ENCODE measurements at regions of chr15 and their contacts with region 1.

Region 1: DNA sequence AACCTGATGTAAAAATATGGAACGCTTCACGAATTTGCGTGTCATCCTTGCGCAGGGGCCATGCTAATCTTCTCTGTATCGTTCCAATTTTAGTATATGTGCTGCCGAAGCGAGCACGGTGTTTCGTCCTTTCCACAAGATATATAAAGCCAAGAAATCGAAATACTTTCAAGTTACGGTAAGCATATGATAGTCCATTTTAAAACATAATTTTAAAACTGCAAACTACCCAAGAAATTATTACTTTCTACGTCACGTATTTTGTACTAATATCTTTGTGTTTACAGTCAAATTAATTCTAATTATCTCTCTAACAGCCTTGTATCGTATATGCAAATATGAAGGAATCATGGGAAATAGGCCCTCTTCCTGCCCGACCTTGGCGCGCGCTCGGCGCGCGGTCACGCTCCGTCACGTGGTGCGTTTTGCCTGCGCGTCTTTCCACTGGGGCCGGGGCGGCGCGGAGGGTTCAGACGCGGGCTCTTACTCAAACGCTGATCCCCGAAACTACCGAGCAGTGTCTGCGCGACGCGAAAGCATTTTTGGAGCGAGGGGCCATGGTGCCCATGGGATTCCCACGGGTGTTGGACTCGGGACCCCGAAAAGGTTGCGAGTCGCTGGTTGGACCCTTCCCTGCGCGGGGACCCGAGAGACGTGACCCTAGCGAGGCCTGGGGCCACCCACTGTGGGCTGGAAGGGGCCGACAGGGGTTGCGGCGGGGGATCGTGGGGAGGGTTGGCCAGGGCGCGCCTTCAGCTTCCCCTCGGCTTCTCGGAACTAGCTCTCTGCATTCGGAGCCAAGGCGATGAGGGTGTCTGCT is at the start of gene RNU6-1:
- DNase-seq: peak; percentile 88
- ATAC-seq: peak; percentile 84
- H3K4me3 ChIP-seq: peak within 1 kb of the TSS; percentile 81 to 85
- H3K27ac ChIP-seq: peak within 1 kb of the TSS; percentile 89
- H3K4me1 ChIP-seq: peaks cover 74% of the 10 kb centered on the region
- H3K27me3 ChIP-seq: no peaks in the 10 kb centered on the region
- CTCF ChIP-seq: no peak
- total RNA-seq, gene RNU6-1: not detected

Region 2: DNA sequence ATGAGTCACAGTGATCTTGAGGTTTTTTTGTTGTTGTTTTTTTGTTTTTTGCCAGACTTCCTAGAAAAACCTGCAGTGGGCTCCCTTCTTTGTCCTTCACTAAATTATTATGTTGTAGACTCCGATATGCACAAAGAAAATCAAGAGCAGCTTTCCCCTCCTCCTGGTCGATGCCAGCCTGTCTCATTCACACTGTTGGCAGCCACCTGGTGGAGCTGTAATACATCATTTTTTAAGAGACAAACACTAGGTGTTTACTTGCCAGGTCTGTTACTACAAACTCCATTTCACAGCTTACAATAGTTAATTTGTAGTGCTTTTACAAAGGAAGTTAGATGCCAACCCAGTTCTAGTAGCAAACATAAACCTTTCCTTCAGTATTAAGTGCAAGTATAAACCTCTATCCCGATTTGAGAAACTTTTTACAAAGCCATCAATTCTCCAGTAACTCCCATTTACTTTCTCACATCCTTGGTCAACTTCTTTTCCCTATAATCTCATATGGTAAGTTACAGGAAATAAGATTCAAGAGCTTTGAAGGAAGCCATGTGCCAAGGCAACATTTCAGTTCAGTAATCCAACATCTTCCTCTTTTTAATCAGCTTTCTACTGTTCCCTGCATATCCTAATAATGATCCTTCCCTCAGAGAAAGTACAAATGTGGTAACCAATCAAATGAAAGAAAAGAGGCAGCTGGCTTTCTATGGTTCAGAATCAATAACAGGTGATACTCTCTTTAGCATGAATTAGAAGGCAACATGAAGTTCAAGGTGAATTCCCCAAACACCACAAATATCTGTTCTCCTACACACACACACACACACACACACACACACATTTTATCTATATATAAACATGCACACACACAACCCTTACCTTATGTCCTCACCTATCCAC is 599.7 kb before region 1 on chr15:
- CTCF ChIA-PET with region 1: no interaction called
- POLR2A ChIA-PET with region 1: no interaction called
- in situ Hi-C with region 1: no loop called
- intact Hi-C with region 1: loop called (anchors 10 kb)
- DNase-seq: no peak
- ATAC-seq: peak; percentile 91
- H3K4me3 ChIP-seq: no peak overlapping the region
- H3K27ac ChIP-seq: peak overlapping the region; percentile 59
- H3K4me1 ChIP-seq: peaks cover 37% of the 10 kb centered on the region
- H3K27me3 ChIP-seq: no peaks in the 10 kb centered on the region
- CTCF ChIP-seq: peak; percentile 72

Region 3: GRCh38 chr15:67383899-67384298 is 456.2 kb before region 1 on chr15:
- CTCF ChIA-PET with region 1: no interaction called
- POLR2A ChIA-PET with region 1: no interaction called
- in situ Hi-C with region 1: no loop called
- intact Hi-C with region 1: loop called (anchors 10 kb)
- DNase-seq: no peak
- ATAC-seq: no peak
- H3K4me3 ChIP-seq: no peak overlapping the region
- H3K27ac ChIP-seq: no peak overlapping the region
- H3K4me1 ChIP-seq: no peaks in the 10 kb centered on the region
- H3K27me3 ChIP-seq: no peaks in the 10 kb centered on the region; the same call in none of the 2 replicates
- CTCF ChIP-seq: peak; percentile 33; the same call in 1 of the 2 replicates

Region 4: DNA sequence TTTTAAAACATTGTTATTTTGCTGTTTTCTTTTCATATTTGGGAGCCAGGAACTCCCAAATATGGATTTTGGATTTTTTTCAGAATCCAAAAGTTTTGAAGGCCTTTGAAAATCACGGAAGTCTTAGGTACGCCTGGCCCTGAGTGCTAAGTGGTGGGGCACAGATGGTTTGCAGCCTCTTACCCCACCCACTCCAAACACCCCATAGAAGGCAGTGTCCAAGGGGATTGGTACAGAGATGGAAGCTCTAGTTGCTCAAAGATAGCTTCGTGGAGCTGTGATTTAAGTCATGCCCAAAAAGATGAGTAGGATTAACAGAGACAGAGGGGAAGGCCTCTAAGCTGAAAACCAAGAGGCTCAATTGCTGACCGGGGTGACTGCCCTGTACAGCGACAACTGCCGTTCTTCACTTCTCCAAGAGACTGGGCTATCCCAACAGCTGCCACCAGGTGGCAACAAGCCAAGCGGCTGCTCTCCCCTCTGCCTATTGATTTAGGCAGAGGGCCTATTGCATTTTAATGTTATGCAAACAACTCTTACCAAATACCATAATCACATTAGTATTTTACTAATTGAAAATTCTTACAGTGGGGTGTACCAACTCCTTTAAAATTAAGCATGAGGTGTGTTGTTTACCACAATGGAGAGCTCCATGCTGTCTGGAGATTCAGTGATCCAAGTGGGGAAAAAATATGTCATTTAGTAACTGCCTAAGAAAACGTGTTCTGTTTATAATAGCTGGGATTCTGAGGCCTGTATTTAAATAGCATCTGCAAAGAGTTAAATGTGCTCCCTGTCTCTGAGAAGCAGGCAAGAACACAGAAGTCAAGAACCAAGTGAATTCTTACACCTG is 383.2 kb before region 1 on chr15:
- CTCF ChIA-PET with region 1: interaction called, 3 read pairs
- POLR2A ChIA-PET with region 1: no interaction called
- in situ Hi-C with region 1: no loop called
- intact Hi-C with region 1: loop called (anchors 2 kb)
- DNase-seq: peak; percentile 56
- ATAC-seq: peak; percentile 98
- H3K4me3 ChIP-seq: no peak overlapping the region
- H3K27ac ChIP-seq: no peak overlapping the region
- H3K4me1 ChIP-seq: no peaks in the 10 kb centered on the region
- H3K27me3 ChIP-seq: no peaks in the 10 kb centered on the region
- CTCF ChIP-seq: peak; percentile 96

Region 5: DNA sequence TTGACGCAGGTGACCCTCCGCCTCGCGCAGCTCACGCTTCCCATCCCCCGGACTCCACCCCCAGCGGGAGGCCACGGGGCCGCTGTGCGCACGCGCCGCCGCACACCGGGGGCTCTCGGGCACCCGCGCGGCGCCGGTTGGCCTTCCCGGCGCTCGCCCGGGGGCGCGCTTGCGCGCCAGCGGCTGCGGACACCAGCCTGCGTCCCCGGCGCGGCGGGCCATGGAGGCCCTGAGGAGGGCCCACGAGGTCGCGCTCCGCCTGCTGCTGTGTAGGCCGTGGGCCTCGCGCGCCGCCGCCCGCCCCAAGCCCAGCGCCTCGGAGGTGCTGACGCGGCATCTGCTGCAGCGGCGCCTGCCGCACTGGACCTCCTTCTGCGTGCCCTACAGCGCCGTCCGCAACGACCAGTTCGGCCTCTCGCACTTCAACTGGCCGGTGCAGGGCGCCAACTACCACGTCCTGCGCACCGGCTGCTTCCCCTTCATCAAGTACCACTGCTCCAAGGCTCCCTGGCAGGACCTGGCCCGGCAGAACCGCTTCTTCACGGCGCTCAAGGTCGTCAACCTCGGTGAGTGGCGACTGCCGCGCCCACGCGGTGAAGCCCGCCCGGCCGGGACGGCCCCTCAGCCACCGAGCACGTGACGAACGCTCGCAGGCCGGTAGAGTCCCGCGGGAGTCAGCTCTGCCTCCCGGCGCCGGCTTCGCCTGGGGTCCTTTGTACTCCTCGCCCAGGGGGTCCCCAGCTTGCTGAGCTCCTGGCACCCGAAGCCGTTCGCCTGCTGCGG is 318.9 kb before region 1 on chr15 and contains the start of gene C15orf61:
- CTCF ChIA-PET with region 1: no interaction called
- POLR2A ChIA-PET with region 1: no interaction called
- in situ Hi-C with region 1: no loop called
- intact Hi-C with region 1: loop called (anchors 5 kb)
- DNase-seq: no peak
- ATAC-seq: peak; percentile 94
- H3K4me3 ChIP-seq: peak within 1 kb of the TSS; percentile 77 to 84
- H3K27ac ChIP-seq: peak within 1 kb of the TSS; percentile 86
- H3K4me1 ChIP-seq: peaks cover 15% of the 10 kb centered on the region
- H3K27me3 ChIP-seq: no peaks in the 10 kb centered on the region
- CTCF ChIP-seq: peak; percentile 33
- total RNA-seq, gene C15orf61: 5.6 TPM

Region 6: DNA sequence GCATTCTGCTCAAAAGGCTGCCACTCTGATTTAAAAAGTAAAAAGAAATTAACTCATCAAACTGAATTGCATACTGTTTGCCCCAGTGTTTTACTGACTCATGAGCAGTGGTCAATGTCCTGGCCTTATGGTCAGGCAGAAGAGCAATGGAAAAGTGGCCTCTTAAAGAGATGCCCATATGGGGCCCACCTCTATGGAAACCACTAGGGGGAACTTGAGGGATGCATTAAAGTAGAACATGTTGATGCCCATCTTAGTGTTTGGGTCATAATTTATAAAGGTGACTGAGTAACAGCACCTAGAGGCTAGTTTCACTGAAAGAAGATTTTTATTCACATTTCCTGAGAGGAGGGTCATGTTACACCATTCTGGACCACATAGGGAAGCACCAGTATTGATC is 66.2 kb after region 1 on chr15:
- CTCF ChIA-PET with region 1: no interaction called
- POLR2A ChIA-PET with region 1: no interaction called
- in situ Hi-C with region 1: no loop called
- intact Hi-C with region 1: no loop called
- DNase-seq: no peak
- ATAC-seq: no peak; the same call in 1 of the 2 replicates
- H3K4me3 ChIP-seq: no peak overlapping the region
- H3K27ac ChIP-seq: peak overlapping the region; percentile 20; the same call in 1 of the 2 replicates
- H3K4me1 ChIP-seq: no peaks in the 10 kb centered on the region
- H3K27me3 ChIP-seq: no peaks in the 10 kb centered on the region
- CTCF ChIP-seq: peak; percentile 21; the same call in 1 of the 2 replicates

Region 7: DNA sequence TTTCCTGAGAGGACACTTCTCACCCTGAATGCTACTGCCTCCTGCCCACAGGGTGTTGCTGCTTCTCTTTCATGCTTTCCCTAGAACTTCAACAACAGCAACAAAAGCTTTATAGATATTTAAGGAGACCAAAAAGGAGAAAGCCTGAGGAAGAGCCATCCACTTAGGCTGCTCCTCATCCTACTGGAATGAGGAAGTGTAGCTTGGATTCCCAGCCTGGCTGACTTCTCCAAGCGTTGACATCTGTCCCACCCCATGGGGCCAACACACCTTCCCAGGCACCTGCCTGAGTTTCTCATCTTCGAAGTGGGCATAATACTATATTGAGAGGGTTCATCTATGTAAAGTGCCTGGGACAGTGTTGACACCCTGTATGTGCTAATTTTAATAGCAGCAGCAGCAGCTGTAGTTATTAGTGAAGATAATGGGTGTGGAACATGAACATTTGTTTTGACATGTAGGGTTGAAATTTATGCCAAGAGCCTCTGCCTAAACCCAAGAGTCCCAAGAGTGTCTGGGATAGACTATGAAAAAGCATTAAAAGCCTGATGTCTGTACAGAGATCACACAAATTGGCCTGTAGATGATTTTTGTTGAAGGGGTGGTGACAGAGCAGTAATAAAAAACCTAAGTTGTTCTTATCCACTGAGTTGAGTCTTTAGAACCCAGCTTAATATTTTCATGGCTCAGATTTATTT is 117.4 kb after region 1 on chr15:
- CTCF ChIA-PET with region 1: no interaction called
- POLR2A ChIA-PET with region 1: no interaction called
- in situ Hi-C with region 1: no loop called
- intact Hi-C with region 1: no loop called
- DNase-seq: no peak
- ATAC-seq: no peak
- H3K4me3 ChIP-seq: no peak overlapping the region
- H3K27ac ChIP-seq: no peak overlapping the region
- H3K4me1 ChIP-seq: peaks cover 11% of the 10 kb centered on the region
- H3K27me3 ChIP-seq: no peaks in the 10 kb centered on the region
- CTCF ChIP-seq: no peak

Region 8: GRCh38 chr15:68032672-68033071 is 192.5 kb after region 1 on chr15:
- CTCF ChIA-PET with region 1: no interaction called
- POLR2A ChIA-PET with region 1: no interaction called
- in situ Hi-C with region 1: no loop called
- intact Hi-C with region 1: no loop called
- DNase-seq: no peak
- ATAC-seq: no peak
- H3K4me3 ChIP-seq: no peak overlapping the region
- H3K27ac ChIP-seq: no peak overlapping the region; the same call in 1 of the 2 replicates
- H3K4me1 ChIP-seq: no peaks in the 10 kb centered on the region
- H3K27me3 ChIP-seq: no peaks in the 10 kb centered on the region
- CTCF ChIP-seq: no peak

Region 9: DNA sequence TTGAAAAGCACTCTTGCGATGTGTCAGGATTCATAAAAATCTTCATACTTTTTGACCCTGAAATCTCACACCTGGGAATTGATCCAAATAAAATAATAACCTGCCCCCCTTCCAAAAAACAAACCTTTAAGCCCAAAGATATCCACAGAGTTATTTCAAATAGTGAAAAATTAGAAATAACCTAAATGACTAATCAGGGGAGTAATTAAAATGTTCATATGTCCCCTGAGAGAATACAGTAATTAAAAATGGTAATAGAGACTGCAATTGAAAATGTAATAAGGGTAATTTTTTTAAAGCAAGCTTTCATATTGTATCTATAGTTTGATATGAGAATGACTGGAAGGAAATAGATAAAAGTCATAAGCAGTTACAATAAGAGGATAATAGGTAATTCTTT is 297.0 kb after region 1 on chr15:
- CTCF ChIA-PET with region 1: no interaction called
- POLR2A ChIA-PET with region 1: no interaction called
- in situ Hi-C with region 1: no loop called
- intact Hi-C with region 1: no loop called
- DNase-seq: no peak
- ATAC-seq: no peak
- H3K4me3 ChIP-seq: no peak overlapping the region
- H3K27ac ChIP-seq: no peak overlapping the region
- H3K4me1 ChIP-seq: 0 out of 2 replicates have a peak, but pooled peaks cover 3% of the 10 kb centered on the region
- H3K27me3 ChIP-seq: no peaks in the 10 kb centered on the region
- CTCF ChIP-seq: no peak

Measured in Panc1 (cell line).